HepG2 (cell line): ENCODE measurements at regions of chr9 and their contacts with region 1.

Region 1: DNA sequence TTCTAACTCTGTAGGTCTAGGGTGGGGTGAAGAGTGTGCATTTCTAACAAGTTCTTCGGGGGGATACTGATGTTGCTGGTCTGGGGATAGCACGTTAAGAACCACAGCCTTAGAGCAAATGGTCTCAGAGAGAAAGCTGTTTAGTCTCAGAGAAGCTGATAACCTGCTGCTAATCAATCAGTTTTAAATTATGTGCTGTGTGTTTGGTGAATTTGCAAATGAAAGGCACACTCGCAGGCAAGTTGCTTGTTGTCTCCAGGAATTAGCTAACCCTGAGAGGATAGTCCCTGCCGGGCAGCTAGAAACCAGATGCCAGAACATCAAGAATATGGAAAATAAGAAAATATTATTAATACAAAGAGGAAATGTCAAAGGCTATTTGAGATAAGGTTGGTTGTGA is 79.2 kb downstream of the DMRT2 start:
- DNase-seq: no peak
- ATAC-seq: no peak
- H3K4me3 ChIP-seq: no peak overlapping the region
- H3K27ac ChIP-seq: no peak overlapping the region
- H3K4me1 ChIP-seq: no peaks in the 10 kb centered on the region
- H3K27me3 ChIP-seq: no peaks in the 10 kb centered on the region
- CTCF ChIP-seq: no peak
- EP300 ChIP-seq: no peak
- POLR2A ChIP-seq: no peak
- RAD21 ChIP-seq: no peak

Region 2: GRCh38 chr9:1087120-1087881 is 42.1 kb before region 1 on chr9:
- CTCF ChIA-PET with region 1: no interaction called
- POLR2A ChIA-PET with region 1: no interaction called
- in situ Hi-C with region 1: no loop called
- intact Hi-C with region 1: loop called (anchors 1 kb)
- DNase-seq: no peak
- ATAC-seq: no peak
- H3K4me3 ChIP-seq: no peak overlapping the region
- H3K27ac ChIP-seq: no peak overlapping the region
- H3K4me1 ChIP-seq: no peaks in the 10 kb centered on the region
- H3K27me3 ChIP-seq: no peaks in the 10 kb centered on the region
- CTCF ChIP-seq: no peak
- EP300 ChIP-seq: no peak
- POLR2A ChIP-seq: no peak
- RAD21 ChIP-seq: no peak